PC-9 (cell line): ENCODE measurements at regions of chr16 and their contacts with region 1.

Region 1: GRCh38 chr16:31052124-31052523 is 18.8 kb downstream of the STX4 start:
- DNase-seq: peak; percentile 69 to 93
- H3K4me3 ChIP-seq: no peak overlapping the region
- H3K27ac ChIP-seq: peak overlapping the region; percentile 73
- H3K4me1 ChIP-seq: peaks cover 18% of the 10 kb centered on the region
- H3K27me3 ChIP-seq: no peaks in the 10 kb centered on the region
- CTCF ChIP-seq: no peak

Region 2: DNA sequence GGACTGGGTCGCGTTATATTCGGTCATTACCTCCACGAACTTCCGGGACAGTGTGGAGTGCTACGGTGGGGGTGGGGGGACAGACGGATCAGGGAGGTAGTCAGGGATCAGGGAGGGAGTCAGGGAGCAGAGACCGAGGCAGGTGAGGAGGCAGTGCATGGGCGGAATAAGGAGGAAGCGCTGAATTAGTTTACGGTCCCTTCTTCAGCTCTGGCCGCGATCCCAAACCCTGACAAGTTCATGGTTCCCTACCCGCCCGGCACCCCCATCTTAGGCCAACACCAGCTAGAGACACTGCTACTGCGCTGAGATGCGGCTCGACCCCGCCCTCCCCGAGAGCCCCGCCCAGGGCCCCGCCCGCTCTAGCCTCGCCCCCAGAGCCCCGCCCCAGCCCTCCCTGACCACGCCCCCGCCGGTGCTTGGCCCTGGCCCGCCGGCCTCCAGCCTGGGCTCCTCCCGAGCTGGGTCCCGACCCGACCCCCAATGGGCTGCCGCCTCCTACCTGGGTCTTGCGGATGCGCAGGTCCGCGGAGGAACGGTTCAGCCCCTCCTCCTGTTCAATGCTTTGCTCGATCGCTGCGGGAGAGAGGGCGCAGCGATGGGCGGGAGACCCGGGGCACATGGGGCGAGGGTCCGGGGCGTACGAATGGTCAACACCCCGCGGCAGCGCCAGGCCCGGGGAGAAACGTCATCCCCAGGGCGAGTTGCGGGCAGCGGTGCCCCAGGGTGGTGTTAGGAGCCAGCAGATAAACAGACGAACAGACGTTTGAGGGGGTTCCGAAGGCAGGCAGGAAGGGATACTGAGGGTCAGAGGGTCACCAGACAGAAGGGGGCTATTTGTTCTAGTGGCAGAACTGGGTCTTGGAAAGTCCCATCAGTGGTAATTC is 54.9 kb before region 1 on chr16:
- CTCF ChIA-PET with region 1: no interaction called
- POLR2A ChIA-PET with region 1: interaction called, 25 read pairs
- intact Hi-C with region 1: no loop called
- DNase-seq: peak; percentile 50 to 84
- H3K4me3 ChIP-seq: peak overlapping the region; percentile 67
- H3K27ac ChIP-seq: peak overlapping the region; percentile 80
- H3K4me1 ChIP-seq: peaks cover 24% of the 10 kb centered on the region
- H3K27me3 ChIP-seq: no peaks in the 10 kb centered on the region
- CTCF ChIP-seq: no peak

Region 3: GRCh38 chr16:31010585-31011325 is 41.4 kb before region 1 on chr16 and contains the start of gene STX1B:
- CTCF ChIA-PET with region 1: no interaction called
- POLR2A ChIA-PET with region 1: no interaction called
- intact Hi-C with region 1: no loop called
- DNase-seq: no peak
- H3K4me3 ChIP-seq: no peak within 1 kb of the TSS
- H3K27ac ChIP-seq: no peak within 1 kb of the TSS
- H3K4me1 ChIP-seq: peaks cover 10% of the 10 kb centered on the region
- H3K27me3 ChIP-seq: peaks cover 20% of the 10 kb centered on the region; the same call in 1 of the 2 replicates
- CTCF ChIP-seq: no peak
- total RNA-seq, gene STX1B: 3.9 and 5.6 TPM in 2 replicates

Region 4: DNA sequence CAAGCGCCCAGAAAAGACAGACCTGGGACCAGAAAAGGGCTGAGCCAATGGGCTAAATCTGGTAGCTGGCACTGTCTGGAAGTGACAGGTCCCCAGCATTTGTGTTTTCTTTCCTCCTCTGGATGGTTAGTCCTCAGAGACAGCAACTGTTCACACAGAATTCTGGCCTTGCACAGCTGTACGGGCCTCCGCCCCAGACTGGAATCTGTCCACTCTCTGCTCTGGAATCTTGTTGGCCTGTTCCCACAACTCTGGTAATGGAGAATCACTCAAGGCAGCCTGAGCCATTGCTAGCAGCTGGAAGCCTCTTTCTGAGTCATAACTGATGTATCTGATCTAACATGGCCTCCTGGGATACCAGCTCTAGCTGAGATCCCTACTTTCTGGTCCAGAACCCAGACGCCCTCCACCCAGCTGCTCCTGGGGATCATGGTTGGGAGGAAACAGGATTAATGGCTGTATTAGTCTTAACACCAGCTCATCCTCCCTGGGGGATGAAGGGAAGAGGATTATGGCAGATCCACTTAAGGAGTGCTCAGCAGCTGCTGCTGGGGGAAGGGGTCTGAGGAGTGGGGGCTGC is 12.8 kb after region 1 on chr16:
- CTCF ChIA-PET with region 1: no interaction called
- POLR2A ChIA-PET with region 1: interaction called, 13 read pairs
- intact Hi-C with region 1: no loop called
- DNase-seq: peak; percentile 64 to 82
- H3K4me3 ChIP-seq: no peak overlapping the region
- H3K27ac ChIP-seq: peak overlapping the region; percentile 31; the same call in 1 of the 2 replicates
- H3K4me1 ChIP-seq: no peaks in the 10 kb centered on the region
- H3K27me3 ChIP-seq: no peaks in the 10 kb centered on the region
- CTCF ChIP-seq: no peak

Region 5: GRCh38 chr16:31256466-31256865 is 204.3 kb after region 1 on chr16:
- CTCF ChIA-PET with region 1: no interaction called
- POLR2A ChIA-PET with region 1: interaction called, 12 read pairs
- intact Hi-C with region 1: no loop called
- DNase-seq: no peak
- H3K4me3 ChIP-seq: no peak overlapping the region
- H3K27ac ChIP-seq: no peak overlapping the region
- H3K4me1 ChIP-seq: peaks cover 15% of the 10 kb centered on the region
- H3K27me3 ChIP-seq: no peaks in the 10 kb centered on the region
- CTCF ChIP-seq: no peak